ENCODE measurements at regions of chr19 and their contacts with region 1.

Region 1: GRCh38 chr19:47190167-47190727 is 40.8 kb downstream of the BBC3 start:
- DNase-seq: no peak
- ATAC-seq: no peak
- H3K4me3 Mint-ChIP-seq: no peak overlapping the region
- H3K27ac Mint-ChIP-seq: no peak overlapping the region
- H3K4me1 Mint-ChIP-seq: peaks cover 20% of the 10 kb centered on the region
- H3K27me3 Mint-ChIP-seq: no peaks in the 10 kb centered on the region
- CTCF ChIP-seq: no peak

Region 2: GRCh38 chr19:46784262-46785053 is 405.8 kb before region 1 on chr19:
- CTCF ChIA-PET with region 1: no interaction called
- POLR2A ChIA-PET with region 1: no interaction called
- intact Hi-C with region 1: no loop called
- DNase-seq: peak; percentile 35
- ATAC-seq: peak; percentile 11
- H3K4me3 Mint-ChIP-seq: peak overlapping the region; percentile 95
- H3K27ac Mint-ChIP-seq: peak overlapping the region; percentile 95
- H3K4me1 Mint-ChIP-seq: peaks cover 46% of the 10 kb centered on the region
- H3K27me3 Mint-ChIP-seq: no peaks in the 10 kb centered on the region
- CTCF ChIP-seq: no peak

Region 3: DNA sequence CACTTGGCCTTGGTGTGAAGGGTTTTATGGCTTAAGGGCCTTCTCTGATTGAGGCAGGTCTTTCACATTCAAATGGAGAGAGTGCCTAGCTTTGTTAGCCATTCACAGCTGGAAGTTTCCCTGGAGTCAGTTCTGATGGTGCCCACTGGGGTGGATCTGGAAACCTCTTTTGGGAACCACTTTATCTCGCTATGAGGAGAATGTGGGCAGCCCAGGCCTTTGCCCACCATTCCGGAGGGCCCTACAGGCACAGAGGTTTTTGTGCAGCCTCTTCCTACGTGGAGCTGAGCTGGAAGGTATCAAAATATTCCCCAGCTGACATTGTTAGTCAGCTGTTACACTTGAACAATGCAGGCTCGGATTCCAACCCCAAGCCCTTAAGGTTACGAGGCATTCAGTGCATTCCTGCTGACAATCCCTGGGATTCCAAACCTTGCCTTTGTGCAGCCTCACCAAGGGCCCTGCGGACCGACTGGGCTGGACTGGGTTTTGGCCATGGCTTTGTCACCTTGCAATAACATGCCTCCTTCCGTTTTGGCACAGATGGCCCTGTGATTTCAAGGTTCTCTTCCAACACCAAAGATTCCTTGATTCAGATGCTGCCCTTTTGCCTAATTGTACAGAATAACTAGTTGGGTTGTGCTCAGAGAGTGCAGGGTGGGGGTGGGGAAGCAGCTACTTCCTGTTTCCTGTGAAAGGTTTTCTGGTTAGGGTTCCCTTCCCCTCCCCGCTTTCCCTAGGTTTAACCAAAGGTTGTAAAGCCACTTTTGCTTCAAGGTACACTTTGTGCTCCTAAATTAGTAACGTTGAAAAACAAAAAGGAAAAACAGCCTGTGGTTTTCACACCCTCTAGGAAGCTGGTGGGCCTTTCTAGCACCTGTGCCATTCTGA is 32.6 kb before region 1 on chr19:
- CTCF ChIA-PET with region 1: interaction called, 3 read pairs
- POLR2A ChIA-PET with region 1: interaction called, 11 read pairs
- intact Hi-C with region 1: loop called (anchors 5 kb)
- DNase-seq: no peak
- ATAC-seq: peak; percentile 47
- H3K4me3 Mint-ChIP-seq: peak overlapping the region; percentile 41
- H3K27ac Mint-ChIP-seq: peak overlapping the region; percentile 75
- H3K4me1 Mint-ChIP-seq: peaks cover 32% of the 10 kb centered on the region
- H3K27me3 Mint-ChIP-seq: no peaks in the 10 kb centered on the region
- CTCF ChIP-seq: no peak

Region 4: DNA sequence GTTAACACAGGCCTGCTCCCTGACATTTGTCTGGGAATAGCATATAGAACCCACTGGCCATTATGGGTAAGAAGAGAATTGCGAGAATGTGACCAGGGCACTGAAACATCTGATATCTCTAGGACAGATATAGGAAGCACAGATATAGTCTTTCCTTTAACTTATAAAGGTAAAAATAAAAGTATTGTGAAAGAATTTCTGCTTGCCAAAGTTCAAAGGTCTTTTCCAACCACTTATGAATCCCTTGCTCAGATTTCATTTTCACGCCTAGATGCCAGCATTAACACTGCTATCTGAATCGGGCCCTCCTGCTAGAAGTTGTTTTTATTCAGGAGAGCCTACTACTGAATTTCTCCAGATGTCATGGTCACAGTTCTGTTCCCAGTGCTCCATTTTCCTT is 13.0 kb after region 1 on chr19:
- CTCF ChIA-PET with region 1: interaction called, 3 read pairs
- POLR2A ChIA-PET with region 1: interaction called, 24 read pairs
- intact Hi-C with region 1: no loop called
- DNase-seq: no peak
- ATAC-seq: no peak
- H3K4me3 Mint-ChIP-seq: no peak overlapping the region
- H3K27ac Mint-ChIP-seq: no peak overlapping the region
- H3K4me1 Mint-ChIP-seq: peaks cover 3% of the 10 kb centered on the region
- H3K27me3 Mint-ChIP-seq: no peaks in the 10 kb centered on the region
- CTCF ChIP-seq: no peak

Region 5: DNA sequence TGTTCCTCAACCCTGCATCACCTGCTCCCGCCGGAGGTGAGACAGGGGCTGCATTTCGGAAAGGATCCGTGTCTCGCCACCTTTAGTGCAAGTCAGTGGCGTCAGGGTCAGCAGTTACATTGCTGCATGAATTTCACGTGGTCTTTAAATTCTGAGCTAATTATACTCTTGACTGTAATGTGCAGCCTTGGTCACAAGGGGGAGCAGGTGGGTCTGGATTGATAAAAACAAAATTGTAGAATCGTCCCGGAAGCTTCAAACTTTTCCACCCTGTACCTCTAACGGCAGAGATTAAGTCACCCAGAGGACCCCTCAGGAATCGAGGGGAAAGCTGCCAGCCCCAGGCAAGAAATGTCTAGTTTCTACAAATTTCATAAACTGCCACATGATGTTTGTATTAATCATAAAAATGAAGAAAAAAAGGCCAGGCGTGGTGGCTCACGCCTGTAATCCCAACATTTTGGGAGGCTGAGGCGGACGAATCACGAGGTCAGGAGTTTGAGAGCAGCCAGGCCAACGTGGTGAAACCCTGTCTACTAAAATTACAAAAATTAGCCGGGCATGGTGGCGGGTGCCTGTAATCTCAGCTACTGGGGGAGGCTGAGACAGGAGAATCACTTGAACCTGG is 20.6 kb after region 1 on chr19:
- CTCF ChIA-PET with region 1: interaction called, 11 read pairs
- POLR2A ChIA-PET with region 1: interaction called, 10 read pairs
- intact Hi-C with region 1: no loop called
- DNase-seq: peak; percentile 53
- ATAC-seq: peak; percentile 94
- H3K4me3 Mint-ChIP-seq: no peak overlapping the region
- H3K27ac Mint-ChIP-seq: peak overlapping the region; percentile 87
- H3K4me1 Mint-ChIP-seq: peaks cover 9% of the 10 kb centered on the region
- H3K27me3 Mint-ChIP-seq: no peaks in the 10 kb centered on the region
- CTCF ChIP-seq: peak; percentile 83

Measured in activated B cell treated with CpG ODN at 0.5 μM for 24 hours (primary cell).